ENCODE measurements at regions of chr20 and their contacts with region 1.

Region 1: DNA sequence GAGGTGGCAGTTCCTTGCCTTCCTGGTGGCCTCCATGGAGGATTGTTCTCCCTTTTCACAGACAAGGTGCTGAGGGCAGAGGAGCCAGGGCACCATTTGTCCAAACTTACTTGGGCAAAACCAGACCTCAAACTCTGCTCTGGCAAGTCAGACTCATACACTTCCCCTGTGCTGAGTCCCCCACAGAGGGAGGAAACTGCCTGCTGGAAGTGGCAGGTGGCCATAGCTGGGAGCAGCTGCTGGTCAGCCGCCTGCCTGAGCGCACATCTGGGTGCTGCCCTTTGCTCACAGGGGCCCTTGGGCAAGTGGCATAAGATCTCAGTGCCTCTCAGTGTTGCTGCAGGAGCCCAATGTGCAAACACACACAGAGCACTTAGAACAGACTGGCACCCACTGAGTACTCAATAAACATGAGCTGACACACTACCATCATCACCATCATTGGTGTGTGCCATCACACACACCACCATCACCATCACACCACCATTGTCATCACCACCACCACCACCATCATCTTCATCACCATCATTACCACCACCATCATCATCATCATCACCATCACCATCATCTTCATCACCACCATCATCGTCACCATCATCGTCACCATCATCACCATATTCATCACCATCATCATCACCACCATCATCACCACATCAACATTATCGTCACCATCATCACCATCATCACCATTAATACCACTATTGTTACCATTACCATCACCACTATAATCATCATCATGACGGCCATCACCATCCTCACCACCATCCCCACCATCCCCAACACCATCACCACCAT is 17.6 kb downstream of the NOL4L start:
- DNase-seq: no peak
- ATAC-seq: peak in 2 of 3 donors; percentile 16 to 32
- H3K4me3 ChIP-seq: no peak overlapping the region
- H3K4me3 Mint-ChIP-seq: no peak overlapping the region
- H3K27ac ChIP-seq: peak overlapping the region; percentile 75
- H3K27ac Mint-ChIP-seq: no peak overlapping the region
- H3K4me1 ChIP-seq: peaks cover 95% of the 10 kb centered on the region
- H3K4me1 Mint-ChIP-seq: peaks cover 27 to 59% of the 10 kb centered on the region in 2 donors
- H3K27me3 ChIP-seq: no peaks in the 10 kb centered on the region
- H3K27me3 Mint-ChIP-seq: no peaks in the 10 kb centered on the region
- CTCF ChIP-seq: no peak

Region 2: DNA sequence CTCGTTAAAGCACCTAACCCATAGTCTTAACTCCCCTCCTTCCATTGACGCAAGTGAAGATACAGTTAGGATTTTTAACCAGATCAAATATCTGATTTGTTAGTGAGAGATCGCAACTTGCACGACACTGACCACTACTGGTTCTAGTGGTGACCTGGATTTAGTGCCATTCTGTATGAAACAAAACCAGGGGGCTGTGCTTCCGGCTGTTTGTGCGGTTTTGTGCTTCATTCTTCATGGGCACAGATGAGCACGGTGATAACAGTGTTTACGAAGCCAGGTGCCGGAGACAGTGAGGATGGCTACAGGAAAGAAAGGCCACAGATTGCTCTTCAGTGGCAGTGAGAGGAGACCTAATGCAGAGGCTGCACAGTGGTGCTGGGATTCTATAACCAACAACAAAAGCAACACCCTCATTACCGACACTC is 57.9 kb before region 1 on chr20:
- intact Hi-C with region 1: no loop called
- DNase-seq: peak; percentile 37 to 88
- ATAC-seq: peak; percentile 81 to 87 (median 84)
- H3K4me3 ChIP-seq: no peak overlapping the region
- H3K4me3 Mint-ChIP-seq: peak overlapping the region; percentile 86
- H3K27ac ChIP-seq: peak overlapping the region; percentile 79
- H3K27ac Mint-ChIP-seq: peak overlapping the region; percentile 93
- H3K4me1 ChIP-seq: peaks cover 75% of the 10 kb centered on the region
- H3K4me1 Mint-ChIP-seq: peaks cover 55 to 82% of the 10 kb centered on the region in 2 donors
- H3K27me3 ChIP-seq: no peaks in the 10 kb centered on the region
- H3K27me3 Mint-ChIP-seq: no peaks in the 10 kb centered on the region
- CTCF ChIP-seq: peak; percentile 13

Region 3: GRCh38 chr20:32585011-32585518 is 17.5 kb after region 1 on chr20 and contains the start of gene NOL4L:
- intact Hi-C with region 1: loop called (anchors 2 kb)
- DNase-seq: peak in 1 of 2 donors; percentile 67
- ATAC-seq: peak; percentile 16 to 33 (median 30)
- H3K4me3 ChIP-seq: peak within 1 kb of the TSS; percentile 58
- H3K4me3 Mint-ChIP-seq: peak within 1 kb of the TSS; percentile 96
- H3K27ac ChIP-seq: no peak within 1 kb of the TSS
- H3K27ac Mint-ChIP-seq: peak within 1 kb of the TSS; percentile 80 to 90
- H3K4me1 ChIP-seq: peaks cover 44% of the 10 kb centered on the region
- H3K4me1 Mint-ChIP-seq: peaks cover 41 to 58% of the 10 kb centered on the region in 2 donors
- H3K27me3 ChIP-seq: no peaks in the 10 kb centered on the region
- H3K27me3 Mint-ChIP-seq: no peaks in the 10 kb centered on the region
- CTCF ChIP-seq: no peak
- total RNA-seq, gene NOL4L: 101 to 136 (median 114) TPM